A549 (cell line): ENCODE measurements at regions of chr9 and their contacts with region 1.

Region 1: DNA sequence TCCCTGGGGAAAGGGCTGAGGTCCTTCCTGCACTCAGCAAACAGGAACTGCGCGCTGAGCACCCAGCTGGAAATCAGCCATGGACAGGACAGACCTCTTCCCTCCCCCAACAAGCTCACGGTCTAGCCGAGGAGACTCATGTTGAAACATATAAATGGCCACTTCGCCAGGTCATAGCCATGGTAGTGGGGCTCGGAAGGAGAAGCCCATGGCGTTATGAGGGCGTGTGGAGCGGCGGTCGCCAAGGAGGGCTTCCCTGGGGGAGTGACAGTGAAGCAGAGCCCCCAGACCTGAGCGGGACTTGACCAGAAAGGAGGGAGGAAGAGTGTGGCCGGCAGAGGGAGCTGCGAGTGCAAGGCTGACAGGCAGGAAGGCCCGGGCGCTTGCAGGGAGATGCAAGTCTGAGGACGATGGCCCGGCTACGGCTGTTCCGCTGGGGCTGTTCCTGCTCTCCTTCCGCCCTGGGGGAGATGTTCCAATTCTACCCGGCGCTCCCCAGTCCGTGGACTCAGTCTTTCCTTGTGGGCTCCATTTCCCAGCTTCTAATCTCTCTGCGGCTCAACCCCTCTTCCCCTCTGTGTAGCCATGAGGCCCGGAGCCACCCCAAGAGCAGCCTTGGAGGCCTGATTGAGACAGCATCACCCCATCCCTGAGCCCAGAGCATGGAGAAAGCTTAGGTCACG is 43.9 kb upstream of the PRRC2B start:
- DNase-seq: peak; percentile 85 to 86
- ATAC-seq: peak; percentile 97 to 98
- H3K4me3 ChIP-seq: 0 out of 3 replicates have a peak overlapping the region, but pooled peaks have one; percentile 20
- H3K27ac ChIP-seq: peak overlapping the region; percentile 23 to 69; a peak in 4 of 6 replicates
- H3K4me1 ChIP-seq: 0 out of 3 replicates have a peak, but pooled peaks cover 3% of the 10 kb centered on the region
- CTCF ChIP-seq: peak; percentile 84
- EP300 ChIP-seq: no peak
- POLR2A ChIP-seq: no peak
- RAD21 ChIP-seq: peak; percentile 91 to 92

Region 2: GRCh38 chr9:131366761-131367401 is 16.9 kb after region 1 on chr9:
- CTCF ChIA-PET with region 1: interaction called, 33 read pairs
- POLR2A ChIA-PET with region 1: interaction called, 11 read pairs
- DNase-seq: peak; percentile 65 to 89
- ATAC-seq: peak; percentile 93 to 95
- H3K4me3 ChIP-seq: no peak overlapping the region
- H3K27ac ChIP-seq: peak overlapping the region in 1 of 2 experiments; percentile 69; a peak in 3 of 6 replicates
- H3K4me1 ChIP-seq: peaks cover 16% of the 10 kb centered on the region
- CTCF ChIP-seq: peak; percentile 47
- EP300 ChIP-seq: no peak
- POLR2A ChIP-seq: no peak
- RAD21 ChIP-seq: peak; percentile 66 to 73

Region 3: GRCh38 chr9:131393622-131394463 is 43.8 kb after region 1 on chr9 and contains the start of gene PRRC2B:
- CTCF ChIA-PET with region 1: interaction called, 11 read pairs
- POLR2A ChIA-PET with region 1: no interaction called
- DNase-seq: peak; percentile 86 to 88
- ATAC-seq: peak; percentile 80 to 89
- H3K4me3 ChIP-seq: peak within 1 kb of the TSS; percentile 61
- H3K27ac ChIP-seq: peak within 1 kb of the TSS; percentile 85 to 99
- H3K4me1 ChIP-seq: peaks cover 45% of the 10 kb centered on the region
- CTCF ChIP-seq: peak; percentile 90
- EP300 ChIP-seq: no peak; a peak in 2 of 5 replicates
- POLR2A ChIP-seq: peak; percentile 90
- RAD21 ChIP-seq: peak; percentile 18 to 70; a peak in 3 of 5 replicates
- polyA plus RNA-seq, gene PRRC2B: 35.6 and 57.0 TPM in 2 replicates

Region 4: DNA sequence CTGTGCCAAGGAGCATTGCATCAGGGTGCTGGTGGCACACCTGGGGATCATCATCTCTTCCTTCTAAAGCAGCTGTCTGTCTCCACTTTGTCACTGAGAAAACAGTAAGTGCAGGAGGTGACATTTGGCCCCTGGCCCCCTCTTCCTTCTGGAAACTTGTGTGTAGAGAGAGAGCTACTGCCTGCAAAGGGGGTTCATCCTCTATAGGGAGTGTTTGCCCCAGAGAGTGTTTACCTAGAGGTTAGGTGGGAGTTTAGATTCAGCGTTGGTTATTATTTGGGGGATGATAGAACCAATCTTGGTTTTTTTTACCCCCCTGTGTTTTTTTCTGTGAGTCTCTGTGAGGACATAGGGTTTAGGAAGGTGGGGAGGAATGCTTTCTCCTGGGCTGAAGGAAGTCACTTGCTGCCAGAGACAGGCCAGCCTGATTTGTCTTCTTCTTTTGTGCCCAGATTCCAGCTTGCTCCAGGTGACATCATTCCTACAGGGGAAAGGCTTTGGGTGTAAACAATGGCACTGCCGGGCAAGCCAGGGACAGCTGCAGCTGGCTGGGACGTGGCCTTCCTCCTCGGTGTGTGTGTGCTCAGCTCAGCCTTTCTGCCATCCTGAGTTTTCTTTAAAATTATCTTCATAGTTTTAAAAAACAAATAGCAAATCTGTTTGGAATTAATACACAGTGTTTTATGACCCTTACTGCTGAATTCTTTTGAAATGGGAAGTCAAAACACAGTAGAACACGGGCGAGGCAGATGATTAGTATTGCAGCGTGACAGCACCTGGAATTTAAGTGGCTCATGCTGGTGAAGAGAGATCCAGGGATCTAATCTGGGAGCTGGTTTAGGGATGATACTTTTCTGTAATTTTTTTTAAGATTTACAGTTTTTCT is 68.4 kb after region 1 on chr9:
- CTCF ChIA-PET with region 1: interaction called, 11 read pairs
- POLR2A ChIA-PET with region 1: no interaction called
- DNase-seq: no peak
- ATAC-seq: peak in 1 of 2 experiments; percentile 15; a peak in 1 of 6 replicates
- H3K4me3 ChIP-seq: no peak overlapping the region; the same call in 2 of the 3 replicates
- H3K27ac ChIP-seq: peak overlapping the region; percentile 59 to 67; a peak in 4 of 6 replicates
- H3K4me1 ChIP-seq: peaks cover 96% of the 10 kb centered on the region
- CTCF ChIP-seq: no peak
- EP300 ChIP-seq: no peak
- POLR2A ChIP-seq: no peak
- RAD21 ChIP-seq: no peak

Region 5: GRCh38 chr9:131447148-131447547 is 97.1 kb after region 1 on chr9:
- CTCF ChIA-PET with region 1: interaction called, 14 read pairs
- POLR2A ChIA-PET with region 1: no interaction called
- DNase-seq: no peak
- ATAC-seq: no peak; a peak in 1 of 6 replicates
- H3K4me3 ChIP-seq: no peak overlapping the region
- H3K27ac ChIP-seq: no peak overlapping the region
- H3K4me1 ChIP-seq: no peaks in the 10 kb centered on the region
- CTCF ChIP-seq: no peak
- EP300 ChIP-seq: no peak
- POLR2A ChIP-seq: no peak
- RAD21 ChIP-seq: no peak

Region 6: DNA sequence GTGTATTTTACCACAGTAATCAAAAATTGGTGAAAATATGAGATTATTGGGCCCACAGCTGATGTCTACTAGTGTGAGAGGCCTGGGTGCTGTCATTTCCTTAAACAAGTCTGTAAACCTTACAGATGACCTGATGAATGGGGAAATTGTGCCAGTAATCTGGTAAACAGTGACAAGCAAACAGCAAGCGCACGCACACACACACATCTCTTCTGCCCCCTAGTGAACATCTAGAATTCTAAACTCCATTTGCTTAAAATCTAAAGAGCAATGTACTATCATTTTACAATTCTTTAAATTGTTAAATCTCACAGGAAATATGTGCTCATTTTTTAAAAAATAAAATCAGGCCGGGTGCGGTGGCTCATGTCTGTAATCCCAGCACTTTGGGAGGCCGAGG is 397.3 kb after region 1 on chr9:
- CTCF ChIA-PET with region 1: interaction called, 11 read pairs
- POLR2A ChIA-PET with region 1: no interaction called
- DNase-seq: peak in 1 of 2 experiments; percentile 84
- ATAC-seq: peak; percentile 57 to 76
- H3K4me3 ChIP-seq: no peak overlapping the region
- H3K27ac ChIP-seq: no peak overlapping the region
- H3K4me1 ChIP-seq: no peaks in the 10 kb centered on the region
- CTCF ChIP-seq: peak; percentile 62
- EP300 ChIP-seq: no peak
- POLR2A ChIP-seq: no peak
- RAD21 ChIP-seq: peak; percentile 81 to 91